ENCODE measurements at regions of chr9 and their contacts with region 1.

Region 1: GRCh38 chr9:21317956-21318923 is 13.1 kb upstream of the IFNA5 start:
- H3K4me3 ChIP-seq: no peak overlapping the region
- H3K27ac ChIP-seq: no peak overlapping the region
- H3K4me1 ChIP-seq: no peaks in the 10 kb centered on the region; the same call in 1 of the 2 replicates
- CTCF ChIP-seq: no peak

Region 2: GRCh38 chr9:20744036-20744630 is 574.1 kb before region 1 on chr9:
- CTCF ChIA-PET with region 1: no interaction called
- POLR2A ChIA-PET with region 1: no interaction called
- H3K4me3 ChIP-seq: no peak overlapping the region
- H3K27ac ChIP-seq: no peak overlapping the region
- H3K4me1 ChIP-seq: 0 out of 2 replicates have a peak, but pooled peaks cover 4% of the 10 kb centered on the region
- CTCF ChIP-seq: no peak

Region 3: GRCh38 chr9:21210311-21210710 is 107.9 kb before region 1 on chr9:
- CTCF ChIA-PET with region 1: interaction called, 15 read pairs
- POLR2A ChIA-PET with region 1: no interaction called
- H3K4me3 ChIP-seq: no peak overlapping the region
- H3K27ac ChIP-seq: no peak overlapping the region
- H3K4me1 ChIP-seq: no peaks in the 10 kb centered on the region
- CTCF ChIP-seq: no peak

Region 4: DNA sequence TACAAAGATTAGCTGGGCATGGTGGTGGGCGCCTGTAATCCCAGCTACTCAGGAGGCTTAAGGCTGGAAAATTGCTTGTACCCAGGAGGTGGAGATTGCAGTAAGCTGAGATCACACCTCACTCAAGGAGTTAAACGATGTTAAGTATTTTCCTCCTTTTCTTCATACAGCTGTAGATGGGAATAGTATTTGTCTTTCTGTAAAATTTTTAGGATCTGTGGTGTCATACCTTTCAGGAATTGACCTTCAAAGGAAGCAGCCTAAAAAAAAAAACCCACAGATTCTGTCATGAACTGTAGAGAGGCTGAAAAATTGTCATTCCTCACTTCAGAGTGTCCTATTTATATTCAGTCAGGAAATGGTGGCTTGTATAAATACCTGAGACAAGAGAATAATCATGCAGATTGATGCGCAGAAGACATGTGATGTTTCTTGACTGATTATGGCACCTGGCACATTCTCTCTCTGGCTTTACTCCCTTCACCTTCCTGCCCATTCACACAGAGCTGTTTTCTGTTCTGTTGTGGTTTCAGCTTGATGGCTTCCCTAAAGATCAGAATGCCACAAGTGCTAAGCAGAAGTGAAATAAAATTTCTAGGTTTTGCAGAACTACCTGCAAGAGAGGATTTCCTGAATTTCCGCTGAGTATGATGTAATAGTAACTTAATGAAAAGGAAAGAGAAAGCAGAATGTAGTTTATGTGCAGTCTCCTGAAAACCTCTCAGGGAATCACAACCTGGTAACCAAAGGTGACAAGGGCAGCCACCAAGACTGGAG is 125.8 kb after region 1 on chr9:
- CTCF ChIA-PET with region 1: interaction called, 18 read pairs
- POLR2A ChIA-PET with region 1: no interaction called
- H3K4me3 ChIP-seq: no peak overlapping the region
- H3K27ac ChIP-seq: no peak overlapping the region
- H3K4me1 ChIP-seq: no peaks in the 10 kb centered on the region
- CTCF ChIP-seq: no peak

Region 5: GRCh38 chr9:21455320-21455719 is 137.1 kb after region 1 on chr9:
- CTCF ChIA-PET with region 1: interaction called, 64 read pairs
- POLR2A ChIA-PET with region 1: no interaction called
- H3K4me3 ChIP-seq: no peak overlapping the region
- H3K27ac ChIP-seq: no peak overlapping the region
- H3K4me1 ChIP-seq: no peaks in the 10 kb centered on the region
- CTCF ChIP-seq: peak; percentile 38; the same call in 1 of the 2 replicates

Measured in HEK293 (cell line).